Gastrocnemius medialis (tissue), 4 donors: ENCODE measurements at regions of chrX and their contacts with region 1.

Region 1: GRCh38 chrX:40580537-40581335 is at the start of gene ATP6AP2:
- DNase-seq: peak; percentile 91 to 93
- ATAC-seq: peak; percentile 98 to 100
- H3K4me3 ChIP-seq: peak within 1 kb of the TSS; percentile 65 to 73 (median 70)
- H3K27ac ChIP-seq: peak within 1 kb of the TSS; percentile 84 to 93 (median 92)
- H3K4me1 ChIP-seq: peaks cover 0 to 4% of the 10 kb centered on the region in 2 donors
- H3K27me3 ChIP-seq: peaks cover 0 to 5% (median 0%) of the 10 kb centered on the region in 3 donors
- CTCF ChIP-seq: no peak
- POLR2A ChIP-seq: peak; percentile 81 to 85
- total RNA-seq, gene ATP6AP2: 23.2 to 40.1 (median 31.5) TPM

Region 2: GRCh38 chrX:40207626-40208025 is 373.1 kb before region 1 on chrX:
- in situ Hi-C with region 1: no loop called
- intact Hi-C with region 1: no loop called
- DNase-seq: no peak
- ATAC-seq: no peak
- H3K4me3 ChIP-seq: no peak overlapping the region
- H3K27ac ChIP-seq: no peak overlapping the region
- H3K4me1 ChIP-seq: no peaks in the 10 kb centered on the region
- H3K27me3 ChIP-seq: no peaks in the 10 kb centered on the region
- CTCF ChIP-seq: no peak
- POLR2A ChIP-seq: no peak

Region 3: DNA sequence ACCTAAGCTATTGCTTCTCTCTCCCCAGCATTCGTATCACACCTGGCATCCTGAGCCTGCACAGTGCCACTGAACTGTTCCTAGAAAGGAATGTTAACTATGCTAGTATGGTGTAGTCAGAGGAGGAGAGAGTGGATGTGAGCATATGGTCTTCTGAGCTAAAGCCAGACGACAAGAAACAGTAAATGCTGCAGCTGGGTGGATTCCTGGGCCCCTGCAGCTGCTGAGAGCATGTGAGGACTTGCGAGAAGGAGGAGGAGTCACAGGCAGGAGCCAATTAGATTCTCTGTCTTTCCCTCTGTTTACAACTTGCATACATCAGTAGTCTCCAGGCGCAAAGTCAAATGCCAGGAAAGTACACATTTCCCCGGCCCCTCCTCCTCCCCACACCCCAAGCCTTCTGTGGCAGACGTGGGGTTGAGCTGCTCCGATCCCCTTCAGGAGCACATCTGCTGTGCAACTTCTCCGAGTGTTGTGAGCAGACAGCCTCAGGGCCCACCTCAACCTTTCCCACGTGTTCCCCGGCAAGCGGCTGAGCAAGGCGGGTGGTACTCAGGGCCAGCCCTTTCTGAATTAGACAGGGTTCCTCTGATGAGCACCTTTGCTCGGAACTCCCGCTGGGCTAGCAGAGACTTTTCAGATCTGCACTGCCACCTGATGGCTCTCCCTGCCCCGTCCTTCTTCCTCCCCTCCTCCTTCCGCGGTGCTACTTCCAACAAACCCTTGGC is 108.7 kb before region 1 on chrX:
- in situ Hi-C with region 1: no loop called
- intact Hi-C with region 1: no loop called
- DNase-seq: peak in 1 of 2 donors; percentile 10
- ATAC-seq: no peak
- H3K4me3 ChIP-seq: no peak overlapping the region
- H3K27ac ChIP-seq: no peak overlapping the region
- H3K4me1 ChIP-seq: no peaks in the 10 kb centered on the region
- H3K27me3 ChIP-seq: peaks cover 0 to 7% (median 0%) of the 10 kb centered on the region in 3 donors
- CTCF ChIP-seq: no peak
- POLR2A ChIP-seq: no peak

Region 4: DNA sequence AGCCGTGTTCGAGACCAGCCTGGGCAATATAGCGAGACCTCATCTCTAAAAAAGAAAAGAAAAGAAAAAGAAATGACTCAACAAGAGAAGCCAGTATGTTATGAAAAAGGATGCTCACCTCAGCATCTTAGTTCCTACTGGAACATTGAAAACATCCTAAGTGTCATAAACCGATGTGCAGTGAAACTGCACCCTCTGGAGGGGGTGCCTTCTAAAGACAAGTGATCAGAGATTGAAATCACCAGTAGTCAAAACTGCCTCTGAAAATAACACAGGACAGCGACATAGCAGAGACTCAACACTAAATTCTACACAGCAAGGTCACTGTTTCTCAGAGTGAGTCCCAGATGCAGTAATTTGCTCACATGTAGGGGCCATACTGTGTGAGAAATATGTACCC is 28.0 kb before region 1 on chrX:
- in situ Hi-C with region 1: no loop called
- intact Hi-C with region 1: loop called (anchors 1 kb)
- DNase-seq: no peak
- ATAC-seq: no peak
- H3K4me3 ChIP-seq: no peak overlapping the region
- H3K27ac ChIP-seq: no peak overlapping the region
- H3K4me1 ChIP-seq: no peaks in the 10 kb centered on the region
- H3K27me3 ChIP-seq: peaks cover 0 to 6% (median 3%) of the 10 kb centered on the region in 3 donors
- CTCF ChIP-seq: no peak
- POLR2A ChIP-seq: no peak